ENCODE measurements at regions of chr11 and their contacts with region 1.

Region 1: DNA sequence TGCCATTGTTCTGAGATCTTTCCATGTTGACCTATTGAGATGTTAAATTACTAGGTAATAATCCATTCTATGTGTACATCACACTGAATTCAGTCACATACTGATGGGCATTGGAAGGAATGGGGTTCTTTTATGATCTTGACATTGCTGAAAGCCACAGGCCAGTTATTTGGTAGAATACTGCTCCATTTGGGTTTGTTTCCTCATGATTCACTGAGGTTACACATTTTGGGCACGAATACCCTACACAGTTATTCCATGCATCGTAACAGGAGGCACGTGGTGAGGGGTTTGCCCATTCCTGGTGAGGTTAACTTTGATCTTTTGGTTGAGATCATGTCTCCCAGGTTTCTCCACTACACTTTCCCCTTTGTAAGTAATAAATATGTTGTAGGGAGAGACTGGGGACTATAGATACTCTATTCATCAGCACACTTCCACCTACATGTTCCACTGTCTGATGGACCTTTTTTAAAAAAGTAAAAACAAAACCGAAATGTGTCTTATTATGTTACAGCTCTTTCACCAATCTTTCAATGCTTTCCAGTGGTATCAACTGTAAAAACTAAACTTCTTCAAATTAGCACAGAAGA is 12.0 kb upstream of the FOLR1 start:
- H3K4me3 ChIP-seq: no peak overlapping the region
- H3K27ac ChIP-seq: no peak overlapping the region
- H3K4me1 ChIP-seq: no peaks in the 10 kb centered on the region
- CTCF ChIP-seq: no peak

Region 2: DNA sequence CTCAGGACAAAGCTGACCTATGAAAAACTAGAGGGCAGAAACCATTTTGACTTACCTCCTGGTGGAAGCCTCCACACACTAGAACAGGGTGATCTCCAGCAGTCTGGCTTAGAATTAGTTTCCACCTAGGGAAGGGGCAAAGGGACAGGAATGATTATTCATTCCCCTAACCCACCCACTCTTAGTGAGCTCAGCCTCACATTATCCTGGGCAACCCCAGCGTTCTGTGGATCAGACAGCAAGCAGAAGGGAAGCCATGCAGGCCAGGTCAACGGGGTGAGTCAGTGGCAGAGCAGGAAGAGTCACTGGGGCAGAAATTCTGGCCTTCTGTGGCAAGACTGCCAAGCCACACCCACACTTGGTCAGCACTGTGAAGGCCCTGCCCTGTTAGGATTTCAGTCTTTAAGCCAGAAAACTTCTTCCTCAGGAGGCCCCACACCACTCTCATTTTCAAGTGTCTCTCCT is 110.1 kb before region 1 on chr11:
- CTCF ChIA-PET with region 1: no interaction called
- POLR2A ChIA-PET with region 1: no interaction called
- H3K4me3 ChIP-seq: no peak overlapping the region
- H3K27ac ChIP-seq: no peak overlapping the region
- H3K4me1 ChIP-seq: peaks cover 2% of the 10 kb centered on the region; the same call in 1 of the 2 replicates
- CTCF ChIP-seq: no peak

Region 3: DNA sequence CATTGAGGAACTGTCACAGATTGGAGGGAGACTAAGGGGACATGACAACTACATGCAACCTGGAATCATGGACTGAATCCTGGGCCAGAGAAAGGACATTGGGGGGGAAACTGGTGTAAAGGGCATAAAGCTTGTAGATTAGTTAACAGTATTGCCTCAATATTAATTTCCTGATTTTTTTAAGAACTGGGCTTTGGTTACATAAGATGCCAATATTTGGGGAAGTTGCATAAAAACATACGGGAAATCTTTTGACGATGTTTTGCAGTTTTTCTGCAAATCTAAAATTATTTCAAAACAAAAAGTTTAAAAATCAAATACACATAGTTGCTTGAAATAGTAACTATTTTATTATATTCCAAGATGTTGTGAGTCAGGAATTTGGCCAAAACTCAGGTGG is 47.3 kb before region 1 on chr11:
- CTCF ChIA-PET with region 1: interaction called, 10 read pairs
- POLR2A ChIA-PET with region 1: no interaction called
- H3K4me3 ChIP-seq: no peak overlapping the region
- H3K27ac ChIP-seq: no peak overlapping the region
- H3K4me1 ChIP-seq: no peaks in the 10 kb centered on the region
- CTCF ChIP-seq: no peak

Region 4: DNA sequence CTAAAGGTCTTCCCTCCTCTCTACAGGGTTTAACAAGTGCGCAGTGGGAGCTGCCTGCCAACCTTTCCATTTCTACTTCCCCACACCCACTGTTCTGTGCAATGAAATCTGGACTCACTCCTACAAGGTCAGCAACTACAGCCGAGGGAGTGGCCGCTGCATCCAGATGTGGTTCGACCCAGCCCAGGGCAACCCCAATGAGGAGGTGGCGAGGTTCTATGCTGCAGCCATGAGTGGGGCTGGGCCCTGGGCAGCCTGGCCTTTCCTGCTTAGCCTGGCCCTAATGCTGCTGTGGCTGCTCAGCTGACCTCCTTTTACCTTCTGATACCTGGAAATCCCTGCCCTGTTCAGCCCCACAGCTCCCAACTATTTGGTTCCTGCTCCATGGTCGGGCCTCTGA is 16.0 kb after region 1 on chr11:
- CTCF ChIA-PET with region 1: interaction called, 12 read pairs
- POLR2A ChIA-PET with region 1: interaction called, 7 read pairs
- H3K4me3 ChIP-seq: no peak overlapping the region
- H3K27ac ChIP-seq: no peak overlapping the region
- H3K4me1 ChIP-seq: no peaks in the 10 kb centered on the region
- CTCF ChIP-seq: no peak